Right ventricle myocardium inferior (tissue), 1 donor: ENCODE measurements at regions of chr9 and their contacts with region 1.

Region 1: DNA sequence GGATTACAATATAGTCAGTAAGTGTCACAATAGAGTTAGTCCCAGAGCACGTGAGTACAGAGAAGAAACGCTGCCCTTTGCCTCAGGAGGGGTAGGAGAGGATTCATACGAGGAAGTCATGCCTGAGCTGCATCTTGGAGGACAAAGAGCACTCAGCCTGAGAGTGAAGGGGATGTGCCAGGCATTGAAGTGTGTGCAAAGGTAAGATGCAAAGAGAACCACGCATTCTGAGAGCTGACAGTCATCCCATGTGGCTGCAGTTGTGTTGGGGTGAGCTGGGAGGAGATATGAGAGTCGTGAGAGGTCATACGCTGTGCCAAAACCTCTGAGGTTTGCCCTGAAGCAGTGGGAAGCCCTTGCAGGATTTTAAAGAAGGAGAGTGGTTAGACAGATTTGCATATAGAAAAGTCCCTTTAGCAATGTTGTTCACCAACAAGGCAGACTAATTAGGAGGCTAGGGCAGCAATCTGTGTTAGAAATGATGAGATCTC is 97.5 kb downstream of the PIP5K1B start:
- DNase-seq: no peak
- ATAC-seq: no peak

Region 2: GRCh38 chr9:68872026-68872501 is 69.5 kb after region 1 on chr9:
- intact Hi-C with region 1: loop called (anchors 5 kb)
- DNase-seq: peak; percentile 73
- ATAC-seq: peak; percentile 95